ENCODE measurements at regions of chr2 and their contacts with region 1.

Region 1: DNA sequence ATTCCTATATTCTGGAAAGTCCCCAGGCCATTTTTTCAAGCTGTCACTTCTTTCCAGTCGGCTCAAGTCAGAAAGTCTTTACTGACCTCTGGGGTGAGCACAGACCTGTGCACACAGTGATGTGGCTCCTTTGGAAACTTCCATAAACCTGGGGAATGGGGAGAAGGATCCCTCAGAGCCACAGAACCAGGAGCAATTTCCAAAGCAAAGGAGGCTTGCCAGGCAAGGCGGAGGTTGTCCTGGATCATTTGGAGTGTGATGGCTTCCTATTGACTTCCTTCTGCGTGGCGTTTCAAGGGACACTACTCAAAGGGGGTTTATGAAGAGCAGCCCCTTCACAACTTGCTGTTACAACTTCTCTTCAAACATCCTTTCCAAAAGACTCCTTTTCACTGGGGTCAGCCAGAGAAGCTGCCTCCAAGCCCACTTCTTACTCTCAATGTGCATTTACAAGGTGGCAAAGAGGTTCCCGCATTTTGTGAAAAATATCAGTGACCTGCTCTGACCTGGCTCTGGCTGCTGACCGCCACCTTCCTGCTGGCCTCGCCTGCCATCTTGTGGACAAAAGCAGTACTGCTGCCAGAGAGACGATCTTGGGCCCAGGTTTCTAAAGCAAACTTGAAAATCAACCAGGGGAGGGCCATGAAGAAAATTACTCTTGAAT is 18.2 kb upstream of the TMEM247 start:
- DNase-seq: peak; percentile 32
- H3K4me3 ChIP-seq: no peak overlapping the region
- H3K27ac ChIP-seq: no peak overlapping the region
- H3K4me1 ChIP-seq: no peaks in the 10 kb centered on the region
- H3K27me3 ChIP-seq: no peaks in the 10 kb centered on the region
- CTCF ChIP-seq: peak; percentile 97 to 100

Region 2: DNA sequence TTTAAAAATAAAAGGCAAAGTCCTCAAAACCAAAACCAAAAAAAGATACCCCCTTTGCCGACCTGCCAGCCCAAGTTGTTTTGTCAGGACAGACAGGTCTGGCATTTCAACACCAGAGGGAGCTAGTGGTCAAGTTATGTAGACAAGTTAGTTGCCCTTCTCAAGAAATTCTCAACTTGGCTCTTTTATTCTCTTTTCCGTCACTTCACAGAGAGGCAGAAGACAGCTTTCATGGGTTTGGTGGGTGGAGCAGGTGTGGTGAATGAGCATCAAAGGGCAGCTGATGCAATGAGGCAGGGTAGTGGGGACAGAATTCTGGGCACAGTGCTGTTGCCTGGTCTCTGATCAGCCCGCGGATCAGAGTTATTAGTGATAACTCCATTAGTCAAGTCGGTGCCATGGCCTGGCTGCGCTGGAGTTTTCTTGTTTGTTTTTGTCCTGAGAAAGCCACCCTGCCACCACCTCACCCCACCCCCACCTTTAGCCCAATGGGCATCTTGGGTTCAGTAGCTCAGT is 467.6 kb before region 1 on chr2:
- CTCF ChIA-PET with region 1: no interaction called
- dilution Hi-C with region 1: no loop called
- in situ Hi-C with region 1: no loop called
- intact Hi-C with region 1: loop called (anchors 1 kb)
- DNase-seq: peak; percentile 58
- H3K4me3 ChIP-seq: no peak overlapping the region
- H3K27ac ChIP-seq: no peak overlapping the region
- H3K4me1 ChIP-seq: peaks cover 19% of the 10 kb centered on the region
- H3K27me3 ChIP-seq: no peaks in the 10 kb centered on the region
- CTCF ChIP-seq: peak; percentile 78 to 79

Region 3: GRCh38 chr2:46062637-46063412 is 398.3 kb before region 1 on chr2:
- CTCF ChIA-PET with region 1: no interaction called
- dilution Hi-C with region 1: no loop called
- in situ Hi-C with region 1: no loop called
- intact Hi-C with region 1: loop called (anchors 2 kb)
- DNase-seq: peak; percentile 53
- H3K4me3 ChIP-seq: no peak overlapping the region
- H3K27ac ChIP-seq: no peak overlapping the region
- H3K4me1 ChIP-seq: peaks cover 4% of the 10 kb centered on the region
- H3K27me3 ChIP-seq: no peaks in the 10 kb centered on the region
- CTCF ChIP-seq: peak; percentile 85 to 92

Region 4: DNA sequence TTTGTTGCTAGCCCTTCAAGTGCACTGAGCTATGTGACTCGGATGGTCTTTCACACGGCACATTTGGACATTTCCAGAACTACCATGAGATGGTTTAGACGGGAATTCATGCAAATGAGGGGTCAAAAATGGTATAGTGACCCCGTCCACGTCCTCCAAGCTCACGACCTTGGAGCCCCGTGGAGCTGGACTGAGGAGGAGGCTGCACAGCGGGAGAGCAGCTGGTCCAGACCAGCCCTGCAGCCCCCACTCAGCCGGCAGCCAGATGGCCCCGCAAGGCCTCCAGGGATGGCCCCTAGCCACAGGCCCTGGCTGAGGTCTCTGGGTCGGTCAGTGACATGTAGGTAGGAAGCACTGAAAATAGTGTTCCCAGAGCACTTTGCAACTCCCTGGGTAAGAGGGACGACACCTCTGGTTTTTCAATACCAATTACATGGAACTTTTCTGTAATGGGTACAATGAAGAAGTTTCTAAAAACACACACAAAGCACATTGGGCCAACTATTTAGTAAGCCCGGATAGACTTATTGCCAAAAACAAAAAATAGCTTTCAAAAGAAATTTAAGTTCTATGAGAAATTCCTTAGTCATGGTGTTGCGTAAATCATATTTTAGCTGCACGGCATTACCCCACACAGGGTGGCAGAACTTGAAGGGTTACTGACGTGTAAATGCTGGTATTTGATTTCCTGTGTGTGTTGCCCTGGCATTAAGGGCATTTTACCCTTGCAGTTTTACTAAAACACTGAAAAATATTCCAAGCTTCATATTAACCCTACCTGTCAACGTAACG is 75.2 kb before region 1 on chr2:
- CTCF ChIA-PET with region 1: no interaction called
- dilution Hi-C with region 1: no loop called
- in situ Hi-C with region 1: no loop called
- intact Hi-C with region 1: loop called (anchors 1 kb)
- DNase-seq: peak; percentile 79
- H3K4me3 ChIP-seq: no peak overlapping the region
- H3K27ac ChIP-seq: peak overlapping the region; percentile 30
- H3K4me1 ChIP-seq: peaks cover 34% of the 10 kb centered on the region
- H3K27me3 ChIP-seq: no peaks in the 10 kb centered on the region
- CTCF ChIP-seq: peak in 1 of 2 donors; percentile 16

Region 5: DNA sequence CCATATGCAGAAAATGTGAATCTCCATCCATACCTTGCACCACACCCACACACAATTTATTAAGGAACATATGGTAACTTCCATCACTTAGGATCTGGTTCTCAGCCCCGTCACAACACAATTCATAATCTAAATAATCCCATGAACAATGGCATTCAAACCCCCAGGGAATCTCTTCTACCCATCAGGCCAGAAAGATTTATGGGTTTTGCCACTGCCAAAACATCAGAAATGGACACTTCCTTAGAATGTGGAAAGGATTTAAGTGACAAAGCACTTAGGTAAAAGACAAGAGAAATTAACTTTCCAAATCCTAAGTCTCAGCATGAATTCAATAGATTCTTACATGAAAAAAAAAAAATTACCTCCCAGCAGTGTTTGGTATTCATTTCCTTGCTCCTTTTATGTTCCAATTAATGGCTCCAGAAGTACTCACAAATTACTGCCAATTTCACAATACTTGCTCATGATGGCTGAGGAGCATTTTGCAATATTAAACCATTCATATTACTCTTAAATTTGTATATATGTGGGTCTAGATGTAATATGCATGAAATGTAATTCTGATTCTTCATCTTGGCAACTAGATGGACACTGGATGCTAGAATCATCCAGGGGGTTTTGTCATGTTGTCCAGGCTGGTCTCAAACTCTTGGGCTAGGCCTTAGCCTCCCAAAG is 38.3 kb before region 1 on chr2:
- CTCF ChIA-PET with region 1: no interaction called
- dilution Hi-C with region 1: no loop called
- in situ Hi-C with region 1: no loop called
- intact Hi-C with region 1: no loop called
- DNase-seq: no peak
- H3K4me3 ChIP-seq: no peak overlapping the region
- H3K27ac ChIP-seq: no peak overlapping the region
- H3K4me1 ChIP-seq: no peaks in the 10 kb centered on the region
- H3K27me3 ChIP-seq: no peaks in the 10 kb centered on the region
- CTCF ChIP-seq: no peak

Measured in mammary epithelial cell (primary cell).